ENCODE measurements at regions of chr18 and their contacts with region 1.

Region 1: GRCh38 chr18:22913857-22914256 is 19.3 kb upstream of the RBBP8 start:
- DNase-seq: no peak
- H3K4me3 ChIP-seq: peak overlapping the region; percentile 20 to 52 (median 32)
- H3K27ac ChIP-seq: peak overlapping the region in 3 of 4 donors; percentile 57 to 66 (median 64)
- H3K4me1 ChIP-seq: peaks cover 0 to 42% (median 2%) of the 10 kb centered on the region in 3 donors
- H3K27me3 ChIP-seq: no peaks in the 10 kb centered on the region
- CTCF ChIP-seq: no peak
- POLR2A ChIP-seq: no peak

Region 2: GRCh38 chr18:22846088-22846683 is 67.7 kb before region 1 on chr18:
- intact Hi-C with region 1: loop called (anchors 10 kb)
- DNase-seq: no peak
- H3K4me3 ChIP-seq: no peak overlapping the region
- H3K27ac ChIP-seq: peak overlapping the region in 2 of 4 donors; percentile 0 to 32
- H3K4me1 ChIP-seq: peaks cover 0 to 78% (median 0%) of the 10 kb centered on the region in 3 donors
- H3K27me3 ChIP-seq: no peaks in the 10 kb centered on the region
- CTCF ChIP-seq: peak in 5 of 6 experiments; percentile 32 to 66 (median 44)
- POLR2A ChIP-seq: no peak